Activated T-helper 2 cell treated with anti-CD3 and anti-CD28 coated beads, Interferon-gamma antibody, Interleukin-2, Interleukin-4, amounts not matched to agents 10 μg/mL and 5 μg/mL and 100 μg/mL, durations not matched to agents 14 hours and 24 hours and 36 hours (primary cell): ENCODE measurements at regions of chr17 and their contacts with region 1.

Region 1: GRCh38 chr17:49414622-49415350 is at the start of gene PHB1:
- DNase-seq: peak; percentile 93
- H3K4me3 Mint-ChIP-seq: peak within 1 kb of the TSS; percentile 99
- H3K27ac Mint-ChIP-seq: peak within 1 kb of the TSS; percentile 87
- H3K4me1 Mint-ChIP-seq: peaks cover 10% of the 10 kb centered on the region
- H3K27me3 Mint-ChIP-seq: peaks cover 10% of the 10 kb centered on the region
- total RNA-seq, gene PHB1: 335 and 339 TPM in 2 replicates

Region 2: DNA sequence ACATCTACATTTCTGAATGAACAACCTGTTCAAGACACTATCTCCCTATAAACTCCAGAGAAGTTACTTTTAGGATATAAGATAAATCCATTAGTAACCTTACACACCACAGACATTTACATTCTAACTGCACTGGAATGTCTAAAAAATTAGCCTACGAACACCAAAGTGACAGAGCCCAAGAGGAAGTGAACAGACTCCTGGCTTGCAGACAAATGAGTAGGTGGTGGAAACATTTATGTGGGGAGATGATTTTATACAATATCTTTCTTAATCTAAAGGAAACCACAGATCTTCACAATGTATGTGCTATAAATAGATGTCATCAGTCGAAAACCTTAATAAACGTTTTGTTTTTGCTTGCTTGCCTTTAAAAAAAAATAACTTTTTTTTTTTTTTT is 71.5 kb before region 1 on chr17:
- intact Hi-C with region 1: loop called (anchors 1 kb)
- DNase-seq: no peak
- H3K4me3 Mint-ChIP-seq: peak overlapping the region; percentile 59
- H3K27ac Mint-ChIP-seq: peak overlapping the region; percentile 74
- H3K4me1 Mint-ChIP-seq: peaks cover 43% of the 10 kb centered on the region
- H3K27me3 Mint-ChIP-seq: peaks cover 30% of the 10 kb centered on the region